Common myeloid progenitor, CD34-positive (primary cell): ENCODE measurements at regions of chr12 and their contacts with region 1.

Region 1: DNA sequence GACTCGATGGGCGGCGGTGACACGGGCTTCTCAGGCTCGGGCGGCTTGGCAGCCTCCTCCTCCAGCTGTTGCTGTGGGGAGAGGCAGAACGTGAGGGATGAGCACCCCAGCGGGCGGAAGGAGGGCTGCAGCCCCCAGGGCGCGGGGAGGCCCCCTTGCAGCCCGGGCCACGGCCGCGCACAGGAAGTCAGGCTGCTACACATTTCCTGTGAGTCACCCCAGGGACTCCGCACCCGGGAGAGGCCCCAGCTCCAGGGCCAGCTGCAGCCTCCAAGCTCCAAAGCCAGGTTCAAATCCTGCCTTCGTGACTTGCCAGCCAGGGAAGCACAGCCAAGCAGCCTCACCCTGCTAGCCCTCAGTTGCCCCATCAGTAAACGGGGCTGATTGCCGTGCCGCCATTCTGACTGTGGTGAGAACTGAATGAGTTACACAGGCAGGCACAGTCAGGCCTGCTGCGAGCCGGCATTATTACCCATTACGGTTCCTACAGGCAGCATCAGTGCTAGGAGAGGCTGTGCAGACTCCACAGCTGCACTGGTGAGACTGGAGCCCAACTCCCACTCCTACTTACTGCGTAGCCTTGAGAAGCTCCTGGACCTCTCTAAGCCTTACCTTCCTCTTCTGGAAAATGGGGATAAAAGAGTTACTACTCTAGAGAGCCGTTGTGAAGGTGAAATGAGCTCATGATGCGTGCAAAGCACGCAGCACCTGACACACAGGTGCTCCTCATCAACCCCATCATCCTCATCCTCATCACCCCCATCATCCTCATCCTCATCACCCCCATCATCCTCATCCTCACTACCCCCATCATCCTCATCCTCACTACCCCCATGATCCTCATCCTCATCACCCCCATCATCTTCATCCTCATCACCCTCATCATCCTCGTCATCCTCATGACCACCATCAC is 100.9 kb downstream of the NCOR2 start:
- DNase-seq: peak; percentile 97 to 100 (median 99)
- H3K4me3 ChIP-seq: peak overlapping the region in 4 of 7 experiments; percentile 8 to 53 (median 25)
- H3K27ac ChIP-seq: peak overlapping the region in 1 of 2 experiments; percentile 39
- H3K4me1 ChIP-seq: peaks cover 7 to 30% (median 26%) of the 10 kb centered on the region in 4 experiments
- H3K27me3 ChIP-seq: no peaks in the 10 kb centered on the region

Region 2: DNA sequence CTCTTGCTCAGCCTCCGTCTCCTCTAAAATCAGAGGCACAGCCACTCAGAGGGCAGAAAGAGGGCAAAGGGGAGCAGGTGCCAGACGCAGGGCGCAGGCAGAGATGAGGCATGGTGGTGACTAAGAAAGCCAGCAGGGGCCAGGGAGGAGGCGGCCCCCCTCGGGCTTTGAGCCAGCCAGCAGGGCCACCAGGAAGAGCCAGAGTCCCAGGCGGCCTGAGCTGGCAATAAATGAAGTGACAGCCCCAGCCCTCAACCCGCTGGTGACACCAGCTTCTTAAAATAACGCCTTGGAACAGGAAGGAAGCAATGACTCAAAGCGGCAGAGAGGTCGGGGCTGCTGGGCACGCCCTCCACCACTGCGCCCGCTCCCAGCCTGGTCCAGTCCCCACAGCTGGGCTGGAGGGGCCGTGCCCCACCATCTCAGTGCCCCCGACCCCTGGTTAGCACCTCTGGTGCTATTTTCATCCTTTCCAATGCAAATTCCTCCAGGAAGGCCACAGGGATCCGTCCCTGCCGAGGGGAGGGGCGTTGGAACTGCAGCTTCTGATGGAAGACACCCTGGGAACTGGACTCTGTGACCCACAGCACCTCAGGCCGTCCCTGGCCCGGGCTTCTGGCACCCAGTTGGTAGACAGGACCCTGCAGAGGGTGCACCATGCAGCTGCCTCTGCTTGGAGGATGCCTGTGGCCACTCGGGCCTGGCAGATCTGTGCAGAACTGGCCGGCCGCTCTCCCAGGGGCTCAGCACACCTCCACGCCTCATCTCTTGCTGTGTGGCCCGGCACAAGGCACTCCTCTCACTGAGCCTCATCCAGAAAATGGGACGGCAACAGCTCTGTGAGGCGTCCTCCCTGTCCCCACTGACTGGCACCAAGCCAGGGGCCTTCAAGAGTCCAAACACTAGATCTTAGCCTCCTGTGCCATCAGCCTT is 12.8 kb before region 1 on chr12:
- CTCF ChIA-PET with region 1: interaction called, 14 read pairs
- POLR2A ChIA-PET with region 1: interaction called, 11 read pairs
- DNase-seq: peak; percentile 94 to 99 (median 98)
- H3K4me3 ChIP-seq: peak overlapping the region in 3 of 7 experiments; percentile 37 to 51 (median 43)
- H3K27ac ChIP-seq: no peak overlapping the region
- H3K4me1 ChIP-seq: peaks cover 1 to 68% (median 64%) of the 10 kb centered on the region in 4 experiments
- H3K27me3 ChIP-seq: no peaks in the 10 kb centered on the region